Heart right ventricle (tissue), 16 donors: ENCODE measurements at regions of chr3 and their contacts with region 1.

Region 1: GRCh38 chr3:55476515-55476914 is 10.6 kb downstream of the WNT5A start:
- DNase-seq: no peak
- ATAC-seq: no peak
- H3K4me3 ChIP-seq: no peak overlapping the region
- H3K27ac ChIP-seq: no peak overlapping the region
- H3K4me1 ChIP-seq: peaks cover 0 to 14% (median under 1%) of the 10 kb centered on the region in 9 donors
- H3K27me3 ChIP-seq: peaks cover 0 to 37% (median 20%) of the 10 kb centered on the region in 7 donors
- CTCF ChIP-seq: no peak

Region 2: GRCh38 chr3:55118453-55118852 is 358.1 kb before region 1 on chr3:
- intact Hi-C with region 1: no loop called
- DNase-seq: no peak
- ATAC-seq: no peak
- H3K4me3 ChIP-seq: no peak overlapping the region
- H3K27ac ChIP-seq: no peak overlapping the region
- H3K4me1 ChIP-seq: no peaks in the 10 kb centered on the region
- H3K27me3 ChIP-seq: peaks cover 0 to 4% (median 0%) of the 10 kb centered on the region in 7 donors
- CTCF ChIP-seq: no peak

Region 3: GRCh38 chr3:55243678-55244077 is 232.8 kb before region 1 on chr3:
- intact Hi-C with region 1: no loop called
- DNase-seq: no peak
- ATAC-seq: no peak
- H3K4me3 ChIP-seq: no peak overlapping the region
- H3K27ac ChIP-seq: no peak overlapping the region
- H3K4me1 ChIP-seq: no peaks in the 10 kb centered on the region
- H3K27me3 ChIP-seq: peaks cover 0 to 7% (median 0%) of the 10 kb centered on the region in 7 donors
- CTCF ChIP-seq: no peak

Region 4: GRCh38 chr3:55362210-55362960 is 114.1 kb before region 1 on chr3:
- intact Hi-C with region 1: no loop called
- DNase-seq: no peak
- ATAC-seq: no peak
- H3K4me3 ChIP-seq: no peak overlapping the region
- H3K27ac ChIP-seq: no peak overlapping the region
- H3K4me1 ChIP-seq: no peaks in the 10 kb centered on the region
- H3K27me3 ChIP-seq: peaks cover 0 to 5% (median 0%) of the 10 kb centered on the region in 7 donors
- CTCF ChIP-seq: no peak

Region 5: DNA sequence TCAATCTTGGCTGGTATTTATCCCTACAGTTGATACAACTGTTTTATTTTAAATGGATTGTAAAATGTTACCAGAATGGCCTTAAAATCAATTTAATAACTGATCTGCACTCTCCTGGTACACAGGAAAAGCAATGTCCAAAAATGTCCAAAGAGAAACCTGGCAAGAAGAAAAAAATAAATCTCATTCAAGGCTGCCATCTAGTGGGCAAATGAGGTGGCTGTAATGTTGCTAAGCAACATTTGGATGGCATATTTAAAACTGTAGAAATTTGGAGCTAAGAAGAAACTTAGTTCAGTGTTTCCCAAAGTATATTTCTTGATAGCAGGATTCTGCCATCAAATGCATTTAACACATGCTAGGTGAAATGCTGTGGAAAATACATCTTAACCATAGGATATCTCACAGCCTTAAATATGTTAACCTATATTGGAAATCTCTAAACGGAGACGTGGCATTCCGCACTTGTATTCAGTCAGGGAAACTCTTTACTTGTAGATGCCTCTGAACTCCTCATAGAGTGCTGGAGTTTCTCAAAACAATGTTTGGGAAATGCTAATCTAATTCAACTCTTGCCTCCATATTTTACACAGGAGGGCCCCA is 774.9 kb after region 1 on chr3:
- intact Hi-C with region 1: loop called in 3 of 10 experiments (anchors 5 kb)
- DNase-seq: peak in 1 of 2 donors; percentile 32
- ATAC-seq: peak in 1 of 8 donors; percentile 39
- H3K4me3 ChIP-seq: no peak overlapping the region
- H3K27ac ChIP-seq: no peak overlapping the region
- H3K4me1 ChIP-seq: no peaks in the 10 kb centered on the region
- H3K27me3 ChIP-seq: peaks cover 0 to 4% (median 0%) of the 10 kb centered on the region in 7 donors
- CTCF ChIP-seq: peak; percentile 55 to 82 (median 77)